ENCODE measurements at regions of chr6 and their contacts with region 1.

Region 1: GRCh38 chr6:168895102-168895812 is 358.4 kb downstream of the THBS2 start:
- DNase-seq: peak; percentile 87 to 92
- ATAC-seq: peak; percentile 79
- H3K4me3 ChIP-seq: no peak overlapping the region
- H3K27ac ChIP-seq: no peak overlapping the region
- H3K4me1 ChIP-seq: no peaks in the 10 kb centered on the region
- H3K27me3 ChIP-seq: no peaks in the 10 kb centered on the region

Region 2: GRCh38 chr6:168838037-168838399 is 57.2 kb before region 1 on chr6:
- intact Hi-C with region 1: no loop called
- DNase-seq: no peak
- ATAC-seq: no peak
- H3K4me3 ChIP-seq: no peak overlapping the region
- H3K27ac ChIP-seq: no peak overlapping the region
- H3K4me1 ChIP-seq: no peaks in the 10 kb centered on the region
- H3K27me3 ChIP-seq: no peaks in the 10 kb centered on the region

Region 3: GRCh38 chr6:169520104-169520503 is 624.8 kb after region 1 on chr6:
- intact Hi-C with region 1: loop called (anchors 2 to 5 kb)
- DNase-seq: no peak
- ATAC-seq: no peak
- H3K4me3 ChIP-seq: no peak overlapping the region
- H3K27ac ChIP-seq: no peak overlapping the region
- H3K4me1 ChIP-seq: no peaks in the 10 kb centered on the region
- H3K27me3 ChIP-seq: no peaks in the 10 kb centered on the region

Region 4: DNA sequence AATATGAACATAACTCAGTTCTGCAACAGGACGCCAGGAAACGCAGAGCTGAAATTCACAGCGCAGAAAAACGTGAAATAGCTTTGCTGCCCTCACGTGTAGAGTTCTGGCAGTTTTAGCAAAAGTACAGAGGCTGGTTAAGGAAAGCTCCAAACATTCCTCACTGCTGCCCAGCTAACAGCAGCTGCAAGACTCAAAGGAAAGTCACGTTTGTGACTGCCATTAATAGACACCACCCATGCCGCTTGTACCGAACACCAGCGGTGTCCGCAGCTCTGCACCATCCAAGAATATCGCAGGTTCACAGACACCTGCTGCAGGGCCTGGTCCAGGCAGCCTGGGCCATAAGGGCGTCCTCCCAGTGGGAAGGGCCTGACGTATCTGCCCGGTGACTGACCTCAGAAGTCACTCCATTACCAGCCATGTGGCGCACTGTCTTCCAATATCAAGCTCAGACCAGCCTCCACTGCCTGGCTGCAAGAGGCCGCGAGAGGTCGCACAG is 745.1 kb after region 1 on chr6:
- intact Hi-C with region 1: loop called (anchors 5 to 10 kb)
- DNase-seq: no peak
- ATAC-seq: peak; percentile 47
- H3K4me3 ChIP-seq: no peak overlapping the region
- H3K27ac ChIP-seq: no peak overlapping the region
- H3K4me1 ChIP-seq: no peaks in the 10 kb centered on the region
- H3K27me3 ChIP-seq: no peaks in the 10 kb centered on the region

Measured in aorta (tissue), 5 donors.